Activated CD4-positive, alpha-beta memory T cell treated with anti-CD3 and anti-CD28 coated beads for 36 hours (primary cell): ENCODE measurements at regions of chr1 and their contacts with region 1.

Region 1: DNA sequence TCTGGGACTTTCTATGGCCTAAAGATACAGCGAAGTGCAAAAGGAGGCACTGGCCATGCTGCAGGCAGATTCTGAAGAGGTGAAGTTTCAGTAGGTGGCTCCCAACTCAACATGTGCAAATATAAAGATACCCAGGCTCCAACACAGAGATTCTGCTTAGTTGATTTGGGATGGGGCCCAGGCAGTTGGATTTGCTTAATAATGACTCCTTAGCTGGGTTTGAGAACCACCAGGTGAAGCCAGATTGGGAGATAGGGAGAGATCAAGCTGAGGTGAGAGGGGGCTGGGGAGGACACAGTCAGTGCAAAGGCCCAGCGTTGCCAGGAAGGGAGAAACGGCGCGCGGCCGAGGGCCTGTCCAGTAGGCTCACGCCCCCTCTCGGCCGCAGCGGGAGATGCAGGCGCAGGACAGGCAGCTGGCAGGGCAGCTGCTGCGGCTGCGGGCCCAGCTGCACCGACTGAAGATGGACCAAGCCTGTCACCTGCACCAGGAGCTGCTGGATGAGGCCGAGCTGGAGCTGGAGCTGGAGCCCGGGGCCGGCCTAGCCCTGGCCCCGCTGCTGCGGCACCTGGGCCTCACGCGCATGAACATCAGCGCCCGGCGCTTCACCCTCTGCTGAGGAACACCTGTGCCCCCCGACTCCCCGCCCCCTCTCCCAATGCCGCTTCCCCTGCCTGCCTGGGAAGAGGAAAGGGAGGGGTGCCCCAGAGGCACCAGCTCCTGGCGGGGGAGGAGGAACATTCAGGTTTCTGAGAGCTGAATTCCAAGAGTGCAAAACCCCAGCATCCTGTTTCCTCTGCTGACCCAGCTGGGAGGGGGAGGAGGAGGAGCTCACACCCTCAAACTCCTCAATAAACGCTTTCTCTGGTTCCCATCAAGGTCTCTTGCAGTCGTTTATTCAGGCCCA is 1.2 kb downstream of the FAM167B start:
- DNase-seq: peak; percentile 89
- H3K4me3 Mint-ChIP-seq: peak overlapping the region; percentile 60
- H3K27ac Mint-ChIP-seq: peak overlapping the region; percentile 97
- H3K4me1 Mint-ChIP-seq: peaks cover 44% of the 10 kb centered on the region
- H3K27me3 Mint-ChIP-seq: no peaks in the 10 kb centered on the region

Region 2: DNA sequence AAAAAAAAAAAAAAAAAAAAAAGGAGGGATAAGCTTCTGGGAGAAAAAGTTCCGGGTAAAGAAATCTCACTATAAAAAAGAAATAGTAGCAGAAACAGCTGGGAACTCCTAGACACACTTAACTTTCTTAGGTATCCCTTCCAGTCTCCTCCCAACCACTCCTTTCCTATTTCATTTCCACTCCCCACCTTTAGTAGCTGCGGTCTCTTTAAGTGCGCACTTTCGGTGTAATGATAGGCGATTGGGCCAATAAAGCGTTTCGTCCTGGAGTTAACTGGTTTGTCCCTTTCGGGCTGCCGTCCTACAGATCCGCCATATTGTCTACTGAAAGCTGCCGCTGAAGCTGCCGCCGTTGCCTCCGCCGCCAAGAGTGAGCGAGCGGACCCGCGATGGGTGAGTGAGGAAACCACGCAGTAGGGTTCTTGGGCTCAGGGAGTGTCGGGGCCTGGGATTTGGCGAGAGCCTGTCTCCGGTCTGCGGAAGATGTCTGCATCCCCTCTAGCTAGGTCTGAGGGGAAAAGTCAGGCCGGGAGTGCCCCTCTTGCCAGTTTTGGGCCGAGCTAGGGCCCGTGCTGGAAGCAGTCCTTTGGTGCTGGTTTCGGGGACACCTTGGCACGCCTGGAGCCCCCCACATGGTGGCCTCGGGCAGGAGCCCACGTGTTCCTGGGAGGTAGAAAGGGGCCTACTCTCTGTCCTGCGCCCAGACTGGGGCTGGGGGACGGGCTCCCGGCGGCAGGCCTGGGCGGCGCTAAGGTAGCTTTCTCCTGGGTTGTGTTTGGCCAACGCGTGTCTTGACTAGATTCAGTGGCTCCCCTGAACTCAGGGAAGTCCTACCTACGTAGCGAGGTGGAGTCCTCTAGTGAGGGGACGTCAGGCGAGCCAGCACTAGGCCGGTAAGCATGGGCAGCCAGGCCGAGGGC is 140.2 kb before region 1 on chr1 and contains the start of gene KPNA6:
- CTCF ChIA-PET with region 1: interaction called, 15 read pairs
- POLR2A ChIA-PET with region 1: interaction called, 3 read pairs
- intact Hi-C with region 1: no loop called
- DNase-seq: peak; percentile 95
- H3K4me3 Mint-ChIP-seq: peak within 1 kb of the TSS; percentile 100
- H3K27ac Mint-ChIP-seq: peak within 1 kb of the TSS; percentile 96
- H3K4me1 Mint-ChIP-seq: peaks cover 37% of the 10 kb centered on the region
- H3K27me3 Mint-ChIP-seq: no peaks in the 10 kb centered on the region
- total RNA-seq, gene KPNA6: 69.8 to 77.6 TPM

Region 3: DNA sequence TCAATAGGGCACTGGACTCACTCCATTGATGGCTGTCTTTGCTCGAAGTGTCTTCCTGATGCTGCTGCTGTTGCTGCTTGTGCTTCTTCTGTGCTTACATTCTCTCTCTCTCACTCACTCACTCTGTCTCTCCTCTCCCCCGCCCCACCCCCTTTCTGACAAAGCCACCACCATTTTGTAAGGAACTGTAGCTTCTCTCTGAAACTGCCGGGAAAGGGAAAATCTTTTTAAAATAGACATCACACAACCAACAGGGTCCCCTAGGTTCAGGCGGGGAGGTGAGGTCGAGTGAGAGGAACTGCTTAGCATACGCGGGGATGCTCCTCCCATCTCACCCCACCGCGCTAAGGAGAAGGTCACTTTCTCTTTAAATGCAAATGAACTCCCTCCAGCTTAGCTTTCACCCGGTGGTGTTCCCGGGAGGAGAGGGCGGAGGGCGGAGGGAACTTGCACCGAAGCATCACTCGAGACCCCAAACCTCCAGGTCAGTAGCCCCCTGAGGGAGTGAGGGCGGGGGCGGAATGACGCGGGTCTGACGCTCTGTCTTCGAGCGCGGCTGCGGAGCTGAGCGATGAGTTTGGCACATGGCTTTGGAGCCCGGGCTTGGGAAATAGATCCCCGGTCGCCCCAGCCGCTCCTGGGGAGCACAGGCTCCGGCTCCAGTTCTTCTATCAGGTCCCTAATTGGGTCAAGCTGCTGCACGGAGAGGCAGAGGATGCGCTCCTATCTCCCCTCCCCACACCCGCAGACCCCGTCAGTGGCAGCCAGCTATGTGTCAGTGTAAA is 47.8 kb before region 1 on chr1 and contains the start of gene CCDC28B:
- CTCF ChIA-PET with region 1: interaction called, 13 read pairs
- POLR2A ChIA-PET with region 1: interaction called, 3 read pairs
- intact Hi-C with region 1: loop called (anchors 1 kb)
- DNase-seq: peak; percentile 67
- H3K4me3 Mint-ChIP-seq: peak within 1 kb of the TSS; percentile 81
- H3K27ac Mint-ChIP-seq: peak within 1 kb of the TSS; percentile 80
- H3K4me1 Mint-ChIP-seq: peaks cover 51% of the 10 kb centered on the region
- H3K27me3 Mint-ChIP-seq: no peaks in the 10 kb centered on the region
- total RNA-seq, gene CCDC28B: 13.4 to 14.8 TPM

Region 4: DNA sequence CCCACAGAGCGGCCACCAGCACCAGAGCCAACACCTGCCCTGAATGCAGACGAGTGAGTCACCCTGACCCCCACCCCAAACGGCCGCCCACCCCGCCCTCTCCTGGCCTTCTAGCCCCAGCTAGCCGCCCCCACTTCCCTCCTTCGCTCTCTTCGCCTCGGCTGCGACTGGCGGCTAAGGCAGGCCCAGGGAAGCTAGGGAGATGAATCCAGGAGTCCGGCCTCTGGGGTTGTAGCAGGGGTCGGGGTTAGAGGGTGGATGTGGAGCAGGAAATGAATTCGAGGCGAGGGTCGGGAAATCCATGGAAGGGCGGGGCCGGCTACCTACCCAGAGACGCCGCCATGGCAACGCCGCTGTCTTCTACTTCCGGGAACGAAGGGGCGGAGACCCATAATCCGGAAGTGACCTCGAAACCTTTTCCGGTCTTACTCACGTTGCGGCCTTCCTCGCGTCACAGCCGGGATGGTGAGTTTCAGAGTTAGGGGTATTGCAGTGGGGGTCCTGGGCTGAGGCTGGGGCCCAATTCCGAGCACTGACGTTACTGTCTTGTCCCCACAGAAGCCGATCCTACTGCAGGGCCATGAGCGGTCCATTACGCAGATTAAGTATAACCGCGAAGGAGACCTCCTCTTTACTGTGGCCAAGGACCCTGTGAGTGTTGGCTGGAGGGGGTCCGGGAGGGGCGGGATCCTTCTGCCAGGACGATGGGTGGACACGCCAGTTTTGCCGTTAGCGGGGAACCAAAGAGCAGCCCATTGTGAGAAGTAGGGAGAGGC is 26.1 kb before region 1 on chr1 and contains the starts of genes EIF3I and TMEM234:
- CTCF ChIA-PET with region 1: interaction called, 65 read pairs
- POLR2A ChIA-PET with region 1: no interaction called
- intact Hi-C with region 1: loop called (anchors 2 kb)
- DNase-seq: peak; percentile 96
- H3K4me3 Mint-ChIP-seq: peak within 1 kb of the TSS; percentile 95
- H3K27ac Mint-ChIP-seq: peak within 1 kb of the TSS; percentile 94
- H3K4me1 Mint-ChIP-seq: peaks cover 38% of the 10 kb centered on the region
- H3K27me3 Mint-ChIP-seq: no peaks in the 10 kb centered on the region
- total RNA-seq, gene EIF3I: 297 to 299 TPM
- total RNA-seq, gene TMEM234: 7.8 to 9.9 TPM

Region 5: GRCh38 chr1:32273388-32274208 is 25.4 kb after region 1 on chr1:
- CTCF ChIA-PET with region 1: interaction called, 8 read pairs
- POLR2A ChIA-PET with region 1: interaction called, 4 read pairs
- intact Hi-C with region 1: loop called (anchors 1 kb)
- DNase-seq: peak; percentile 90
- H3K4me3 Mint-ChIP-seq: peak overlapping the region; percentile 42
- H3K27ac Mint-ChIP-seq: peak overlapping the region; percentile 90
- H3K4me1 Mint-ChIP-seq: peaks cover 46% of the 10 kb centered on the region
- H3K27me3 Mint-ChIP-seq: no peaks in the 10 kb centered on the region

Region 6: GRCh38 chr1:32291708-32292492 is 43.7 kb after region 1 on chr1 and contains the start of gene HDAC1:
- CTCF ChIA-PET with region 1: interaction called, 29 read pairs
- POLR2A ChIA-PET with region 1: interaction called, 16 read pairs
- intact Hi-C with region 1: loop called (anchors 2 kb)
- DNase-seq: peak; percentile 98
- H3K4me3 Mint-ChIP-seq: peak within 1 kb of the TSS; percentile 100
- H3K27ac Mint-ChIP-seq: peak within 1 kb of the TSS; percentile 93
- H3K4me1 Mint-ChIP-seq: peaks cover 46% of the 10 kb centered on the region
- H3K27me3 Mint-ChIP-seq: no peaks in the 10 kb centered on the region
- total RNA-seq, gene HDAC1: 136 to 139 TPM

Region 7: DNA sequence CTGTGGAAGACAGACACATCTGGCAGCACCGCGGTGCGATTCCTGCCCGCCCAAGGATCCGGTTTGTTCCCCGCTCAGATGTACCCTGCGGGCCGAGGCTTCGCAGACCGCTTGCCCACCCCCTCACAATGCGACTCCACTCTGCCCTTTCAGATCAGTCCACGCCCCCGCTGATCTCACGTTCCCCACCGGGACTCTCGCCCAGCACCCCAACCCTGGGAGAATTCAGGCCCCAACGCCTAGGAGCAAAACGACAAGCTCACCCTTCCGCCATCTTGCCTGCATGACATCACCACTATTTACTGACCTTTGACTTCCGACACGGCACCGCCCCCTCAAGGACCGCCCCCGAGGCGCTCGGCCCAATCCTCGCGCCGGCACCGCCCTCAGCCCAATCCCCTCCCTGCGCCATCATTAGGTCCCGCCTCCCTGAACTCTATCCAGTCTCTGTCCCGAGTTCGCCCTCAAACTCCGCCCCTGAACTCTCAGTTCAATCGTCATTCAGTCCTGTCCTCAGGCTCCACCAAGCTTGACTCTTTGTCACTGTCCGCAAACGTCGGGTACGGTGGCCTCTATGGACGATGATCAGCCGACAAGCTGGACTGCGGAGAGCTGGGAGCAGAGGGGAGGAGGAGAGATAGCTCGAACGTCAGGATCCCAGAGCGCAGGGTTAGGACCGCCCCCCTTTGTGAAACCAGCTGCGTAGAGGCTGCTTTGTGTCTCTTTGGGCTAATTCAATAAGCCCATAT is 146.1 kb after region 1 on chr1 and contains the start of gene BSDC1:
- CTCF ChIA-PET with region 1: interaction called, 4 read pairs
- POLR2A ChIA-PET with region 1: interaction called, 3 read pairs
- intact Hi-C with region 1: loop called (anchors 2 kb)
- DNase-seq: peak; percentile 99
- H3K4me3 Mint-ChIP-seq: peak within 1 kb of the TSS; percentile 94
- H3K27ac Mint-ChIP-seq: peak within 1 kb of the TSS; percentile 90
- H3K4me1 Mint-ChIP-seq: peaks cover 22% of the 10 kb centered on the region
- H3K27me3 Mint-ChIP-seq: no peaks in the 10 kb centered on the region
- total RNA-seq, gene BSDC1: 32.1 to 33.2 TPM

Region 8: GRCh38 chr1:32454726-32455125 is 206.5 kb after region 1 on chr1:
- CTCF ChIA-PET with region 1: no interaction called
- POLR2A ChIA-PET with region 1: no interaction called
- intact Hi-C with region 1: no loop called
- DNase-seq: no peak
- H3K4me3 Mint-ChIP-seq: no peak overlapping the region
- H3K27ac Mint-ChIP-seq: no peak overlapping the region
- H3K4me1 Mint-ChIP-seq: no peaks in the 10 kb centered on the region
- H3K27me3 Mint-ChIP-seq: peaks cover 6% of the 10 kb centered on the region